GM12878 (cell line): ENCODE measurements at regions of chr3 and their contacts with region 1.

Region 1: GRCh38 chr3:122245513-122246174 is 62.2 kb downstream of the CASR start:
- DNase-seq: no peak
- ATAC-seq: peak; percentile 51
- H3K4me3 ChIP-seq: peak overlapping the region; percentile 66
- H3K27ac ChIP-seq: peak overlapping the region; percentile 63
- H3K4me1 ChIP-seq: peaks cover 14% of the 10 kb centered on the region
- H3K27me3 ChIP-seq: no peaks in the 10 kb centered on the region
- CTCF ChIP-seq: peak in 2 of 3 experiments; percentile 23 to 28; a peak in 2 of 6 replicates
- EP300 ChIP-seq: no peak
- POLR2A ChIP-seq: no peak
- RAD21 ChIP-seq: no peak

Region 2: GRCh38 chr3:122112754-122113153 is 132.9 kb before region 1 on chr3:
- CTCF ChIA-PET with region 1: no interaction called
- POLR2A ChIA-PET with region 1: interaction called, 178 read pairs
- RAD21 ChIA-PET with region 1: interaction called, 441 read pairs
- SMC1A ChIA-PET with region 1: interaction called, 13 read pairs
- in situ Hi-C with region 1: no loop called
- intact Hi-C with region 1: no loop called
- DNase-seq: no peak
- ATAC-seq: peak; percentile 71; the same call in 2 of the 3 replicates
- H3K4me3 ChIP-seq: no peak overlapping the region
- H3K27ac ChIP-seq: no peak overlapping the region
- H3K4me1 ChIP-seq: peaks cover 8% of the 10 kb centered on the region; the same call in 1 of the 2 replicates
- H3K27me3 ChIP-seq: no peaks in the 10 kb centered on the region
- CTCF ChIP-seq: no peak
- EP300 ChIP-seq: no peak
- POLR2A ChIP-seq: no peak
- RAD21 ChIP-seq: no peak

Region 3: DNA sequence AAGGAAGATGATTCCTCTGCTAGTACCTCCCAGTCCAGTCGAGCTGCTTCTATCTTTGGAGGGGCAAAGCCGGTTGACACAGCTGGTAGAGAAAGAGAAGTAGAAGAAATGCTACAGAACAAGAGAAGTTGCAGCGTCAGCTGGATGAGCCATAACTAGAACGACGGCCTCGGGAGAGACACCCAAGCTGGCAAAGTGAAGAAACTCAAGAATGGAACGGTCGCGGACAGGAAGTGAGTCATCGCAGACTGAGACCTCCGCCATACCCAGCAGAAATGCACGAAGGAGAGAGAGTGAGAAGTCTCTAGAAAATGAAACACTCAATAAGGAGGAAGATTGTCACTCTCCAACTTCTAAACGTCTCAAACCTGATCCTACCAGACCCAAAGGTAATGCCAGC is 416.0 kb after region 1 on chr3:
- CTCF ChIA-PET with region 1: no interaction called
- POLR2A ChIA-PET with region 1: no interaction called
- RAD21 ChIA-PET with region 1: no interaction called
- SMC1A ChIA-PET with region 1: no interaction called
- in situ Hi-C with region 1: no loop called
- intact Hi-C with region 1: no loop called
- DNase-seq: no peak
- ATAC-seq: peak; percentile 36; the same call in 1 of the 3 replicates
- H3K4me3 ChIP-seq: 0 out of 2 replicates have a peak overlapping the region, but pooled peaks have one; percentile 5
- H3K27ac ChIP-seq: no peak overlapping the region
- H3K4me1 ChIP-seq: peaks cover 7% of the 10 kb centered on the region; the same call in 1 of the 2 replicates
- H3K27me3 ChIP-seq: no peaks in the 10 kb centered on the region
- CTCF ChIP-seq: no peak
- EP300 ChIP-seq: no peak
- POLR2A ChIP-seq: no peak
- RAD21 ChIP-seq: no peak